ENCODE measurements at regions of chr19 and their contacts with region 1.

Region 1: GRCh38 chr19:44782729-44783128 is 5.0 kb downstream of the CBLC start:
- DNase-seq: no peak
- ATAC-seq: no peak
- H3K4me3 Mint-ChIP-seq: no peak overlapping the region
- H3K27ac Mint-ChIP-seq: no peak overlapping the region
- H3K4me1 Mint-ChIP-seq: peaks cover 4% of the 10 kb centered on the region
- H3K27me3 Mint-ChIP-seq: peaks cover 4% of the 10 kb centered on the region
- CTCF ChIP-seq: no peak

Region 2: DNA sequence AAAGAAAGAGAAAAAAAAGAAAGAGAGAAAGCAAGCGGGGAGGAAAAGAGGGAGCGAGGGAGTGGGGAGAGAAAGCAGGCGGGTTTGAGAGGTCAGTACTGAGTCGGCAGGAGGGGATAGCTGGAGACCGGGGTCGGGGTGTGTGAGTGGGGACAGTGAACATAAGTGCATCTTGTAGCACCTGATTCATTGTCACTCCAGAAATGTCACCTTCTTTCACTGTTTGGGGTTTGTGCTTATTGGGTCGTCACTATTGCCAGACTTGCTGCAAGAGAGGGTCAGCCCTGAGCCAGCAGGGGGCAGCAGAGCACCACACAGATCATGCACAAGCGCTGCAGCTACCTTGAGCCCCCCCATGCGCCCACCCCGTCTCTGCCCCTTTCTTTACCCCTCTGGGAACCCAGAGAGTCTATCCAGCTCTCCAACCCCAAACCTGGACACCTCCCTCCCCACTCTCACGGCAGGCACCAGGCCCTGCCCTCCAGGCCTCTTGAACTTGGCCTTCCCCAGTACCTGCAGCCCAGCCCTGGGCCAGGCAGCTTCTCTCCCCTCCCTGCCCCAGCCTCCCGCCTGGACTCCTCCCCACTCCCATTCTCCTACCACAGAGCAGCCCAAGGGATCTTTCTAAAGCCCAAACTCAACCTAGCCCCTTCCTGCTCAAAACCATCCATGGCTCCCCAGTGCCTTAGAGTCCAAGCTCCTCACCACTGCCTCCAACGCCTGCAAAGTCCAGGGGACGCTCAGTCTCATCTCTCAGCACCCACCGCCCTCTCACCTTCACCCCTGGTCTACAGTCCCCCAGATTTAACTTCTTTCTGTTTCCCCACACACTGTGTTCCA is 93.5 kb before region 1 on chr19:
- CTCF ChIA-PET with region 1: interaction called, 21 read pairs
- POLR2A ChIA-PET with region 1: no interaction called
- intact Hi-C with region 1: no loop called
- DNase-seq: peak; percentile 90
- ATAC-seq: peak; percentile 46
- H3K4me3 Mint-ChIP-seq: no peak overlapping the region
- H3K27ac Mint-ChIP-seq: no peak overlapping the region
- H3K4me1 Mint-ChIP-seq: peaks cover 43% of the 10 kb centered on the region
- H3K27me3 Mint-ChIP-seq: peaks cover 21% of the 10 kb centered on the region
- CTCF ChIP-seq: peak; percentile 91

Region 3: GRCh38 chr19:44800461-44800860 is 17.7 kb after region 1 on chr19:
- CTCF ChIA-PET with region 1: interaction called, 13 read pairs
- POLR2A ChIA-PET with region 1: no interaction called
- intact Hi-C with region 1: no loop called
- DNase-seq: peak; percentile 91
- ATAC-seq: peak; percentile 99
- H3K4me3 Mint-ChIP-seq: no peak overlapping the region
- H3K27ac Mint-ChIP-seq: no peak overlapping the region
- H3K4me1 Mint-ChIP-seq: peaks cover 9% of the 10 kb centered on the region
- H3K27me3 Mint-ChIP-seq: no peaks in the 10 kb centered on the region
- CTCF ChIP-seq: peak; percentile 79

Region 4: DNA sequence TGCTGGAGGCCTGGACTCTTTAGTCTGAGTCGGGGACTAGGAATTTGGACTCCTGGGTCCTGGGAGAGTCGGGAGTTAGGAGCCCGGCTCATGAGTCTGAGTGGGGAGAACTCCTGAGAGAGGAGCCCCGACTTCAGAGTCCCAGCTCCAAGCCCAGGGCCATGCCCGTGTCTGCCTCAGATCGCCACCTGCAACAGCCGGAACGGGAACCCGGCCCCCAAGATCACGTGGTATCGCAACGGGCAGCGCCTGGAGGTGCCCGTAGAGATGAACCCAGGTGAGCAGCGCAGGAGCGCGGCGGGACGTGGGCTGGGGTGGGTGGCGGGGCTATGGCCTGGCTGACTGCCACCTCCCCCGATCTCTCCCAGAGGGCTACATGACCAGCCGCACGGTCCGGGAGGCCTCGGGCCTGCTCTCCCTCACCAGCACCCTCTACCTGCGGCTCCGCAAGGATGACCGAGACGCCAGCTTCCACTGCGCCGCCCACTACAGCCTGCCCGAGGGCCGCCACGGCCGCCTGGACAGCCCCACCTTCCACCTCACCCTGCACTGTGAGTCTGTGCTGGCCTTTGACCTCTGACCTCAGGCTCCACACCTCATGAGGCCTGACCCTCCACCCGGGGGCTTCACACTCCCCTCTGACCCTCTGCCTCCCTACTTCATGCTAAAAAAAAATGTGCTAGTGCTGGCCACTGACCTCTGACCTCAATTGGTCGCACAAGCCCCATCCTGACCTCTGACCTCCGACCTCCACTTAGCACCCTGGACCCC is 30.5 kb after region 1 on chr19:
- CTCF ChIA-PET with region 1: no interaction called
- POLR2A ChIA-PET with region 1: no interaction called
- intact Hi-C with region 1: no loop called
- DNase-seq: no peak
- ATAC-seq: no peak
- H3K4me3 Mint-ChIP-seq: no peak overlapping the region
- H3K27ac Mint-ChIP-seq: no peak overlapping the region
- H3K4me1 Mint-ChIP-seq: no peaks in the 10 kb centered on the region
- H3K27me3 Mint-ChIP-seq: peaks cover 17% of the 10 kb centered on the region
- CTCF ChIP-seq: no peak

Region 5: GRCh38 chr19:44845612-44846454 is 63.1 kb after region 1 on chr19 and contains the start of gene NECTIN2:
- CTCF ChIA-PET with region 1: interaction called, 30 read pairs
- POLR2A ChIA-PET with region 1: interaction called, 3 read pairs
- intact Hi-C with region 1: no loop called
- DNase-seq: peak; percentile 95
- ATAC-seq: peak; percentile 83
- H3K4me3 Mint-ChIP-seq: peak within 1 kb of the TSS; percentile 76
- H3K27ac Mint-ChIP-seq: peak within 1 kb of the TSS; percentile 76
- H3K4me1 Mint-ChIP-seq: peaks cover 20% of the 10 kb centered on the region
- H3K27me3 Mint-ChIP-seq: peaks cover 25% of the 10 kb centered on the region
- CTCF ChIP-seq: no peak
- total RNA-seq, gene NECTIN2: 0.36 to 0.65 TPM

Measured in activated CD8-positive, alpha-beta T cell treated with anti-CD3 and anti-CD28 coated beads for 36 hours (primary cell).